PC-3 (cell line): ENCODE measurements at regions of chr2 and their contacts with region 1.

Region 1: DNA sequence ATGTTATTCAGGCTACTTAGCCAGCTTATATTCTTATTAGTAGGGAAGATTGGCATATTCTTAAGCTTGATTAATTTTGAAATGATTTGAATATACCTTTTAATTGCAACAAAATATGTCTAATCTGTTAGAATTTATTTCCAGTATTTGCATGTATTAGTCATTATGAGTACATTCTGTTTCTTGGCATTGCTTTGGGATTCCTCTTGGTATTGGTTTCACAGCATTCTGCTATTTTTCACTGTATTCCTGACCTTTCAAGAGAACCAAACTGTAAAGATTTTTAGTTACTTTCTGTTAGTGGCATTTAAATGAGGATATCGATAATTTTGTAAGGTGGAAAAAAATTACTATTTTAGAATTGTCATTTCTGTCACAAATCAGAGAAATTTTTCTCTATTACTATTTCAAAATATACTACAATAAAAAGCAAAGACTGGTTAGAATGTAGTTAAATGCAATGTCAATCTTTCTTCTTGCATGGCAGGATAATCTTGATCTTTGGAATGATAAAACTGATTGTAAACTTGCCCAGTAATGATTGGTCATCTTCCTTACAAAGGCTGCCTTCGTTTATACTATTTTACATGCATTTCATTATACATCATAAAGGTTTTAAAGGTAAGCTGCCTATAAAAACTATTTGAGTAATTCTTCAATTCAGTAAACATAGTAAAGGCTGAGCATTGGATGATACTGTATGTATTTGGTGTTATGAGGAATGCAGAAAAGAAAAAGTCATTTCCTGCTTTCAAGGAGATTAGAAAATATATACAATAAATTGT is 86.1 kb downstream of the SLC4A10 start:
- DNase-seq: peak; percentile 92
- ATAC-seq: peak; percentile 96
- H3K4me3 ChIP-seq: peak overlapping the region; percentile 52
- H3K27ac ChIP-seq: peak overlapping the region; percentile 92
- H3K4me1 ChIP-seq: peaks cover 50% of the 10 kb centered on the region
- H3K27me3 ChIP-seq: no peaks in the 10 kb centered on the region
- CTCF ChIP-seq: no peak

Region 2: GRCh38 chr2:161681046-161681445 is 29.3 kb before region 1 on chr2:
- CTCF ChIA-PET with region 1: no interaction called
- POLR2A ChIA-PET with region 1: no interaction called
- intact Hi-C with region 1: loop called (anchors 2 kb)
- DNase-seq: peak; percentile 86
- ATAC-seq: peak; percentile 87
- H3K4me3 ChIP-seq: no peak overlapping the region
- H3K27ac ChIP-seq: no peak overlapping the region
- H3K4me1 ChIP-seq: peaks cover 20% of the 10 kb centered on the region
- H3K27me3 ChIP-seq: no peaks in the 10 kb centered on the region
- CTCF ChIP-seq: no peak

Region 3: DNA sequence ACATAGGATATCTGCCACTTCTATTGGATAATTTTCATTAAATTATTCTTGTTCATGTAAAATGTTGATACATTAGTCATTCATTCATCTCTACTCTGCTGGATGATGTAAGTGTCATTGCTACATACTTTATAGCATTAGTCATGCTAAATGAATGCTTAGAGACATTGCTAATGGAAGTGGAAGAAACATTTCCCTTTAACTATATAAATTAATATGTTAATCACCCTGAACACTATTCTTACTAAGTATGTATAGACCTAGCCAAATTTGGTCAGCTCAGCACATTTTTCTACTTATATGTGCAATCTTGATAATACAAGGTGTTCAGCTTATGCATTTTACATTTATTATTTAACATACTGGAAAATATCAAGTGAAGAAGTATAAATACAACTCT is 203.5 kb after region 1 on chr2:
- CTCF ChIA-PET with region 1: no interaction called
- POLR2A ChIA-PET with region 1: no interaction called
- intact Hi-C with region 1: loop called (anchors 1 kb)
- DNase-seq: peak; percentile 70
- ATAC-seq: peak; percentile 76
- H3K4me3 ChIP-seq: no peak overlapping the region
- H3K27ac ChIP-seq: no peak overlapping the region
- H3K4me1 ChIP-seq: peaks cover 13% of the 10 kb centered on the region
- H3K27me3 ChIP-seq: no peaks in the 10 kb centered on the region
- CTCF ChIP-seq: no peak

Region 4: GRCh38 chr2:163528640-163529217 is 1818.4 kb after region 1 on chr2:
- CTCF ChIA-PET with region 1: no interaction called
- POLR2A ChIA-PET with region 1: no interaction called
- intact Hi-C with region 1: no loop called
- DNase-seq: no peak
- ATAC-seq: no peak
- H3K4me3 ChIP-seq: no peak overlapping the region
- H3K27ac ChIP-seq: no peak overlapping the region
- H3K4me1 ChIP-seq: no peaks in the 10 kb centered on the region
- H3K27me3 ChIP-seq: no peaks in the 10 kb centered on the region
- CTCF ChIP-seq: no peak